CD8-positive, alpha-beta T cell (primary cell): ENCODE measurements at regions of chr18 and their contacts with region 1.

Region 1: DNA sequence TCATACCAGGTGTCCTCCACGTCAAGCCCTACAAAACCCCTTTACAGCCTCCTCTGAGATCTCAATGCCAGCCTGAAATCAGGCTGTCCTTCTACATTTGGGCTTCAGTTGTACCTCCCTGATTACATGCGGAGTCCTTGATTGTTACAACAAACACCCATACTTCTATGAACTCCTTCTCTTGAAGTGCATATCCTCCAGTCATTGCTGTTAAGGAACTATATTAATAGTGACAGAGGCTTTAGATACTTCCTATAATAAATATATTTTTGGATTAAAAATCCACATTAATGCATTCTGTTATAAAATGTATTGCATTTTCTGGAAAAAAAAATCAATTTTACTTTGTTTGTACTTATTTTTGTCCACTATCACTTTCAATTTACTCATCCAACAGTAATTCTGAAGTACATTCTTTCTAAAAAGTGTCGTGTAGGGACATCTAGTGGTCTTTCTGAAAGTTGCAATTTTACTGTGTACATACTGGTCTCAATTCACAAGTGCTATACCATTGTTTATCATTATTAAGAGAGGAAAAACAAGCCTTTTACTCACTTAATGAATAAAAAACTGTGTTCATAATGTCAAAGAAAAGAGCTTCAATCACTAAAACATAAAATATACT is 316.4 kb downstream of the DSEL start:
- DNase-seq: peak in 2 of 9 experiments; percentile 52 to 59
- ATAC-seq: peak; percentile 54
- H3K4me3 ChIP-seq: no peak overlapping the region
- H3K4me3 Mint-ChIP-seq: no peak overlapping the region
- H3K27ac ChIP-seq: no peak overlapping the region
- H3K27ac Mint-ChIP-seq: no peak overlapping the region
- H3K4me1 ChIP-seq: no peaks in the 10 kb centered on the region
- H3K4me1 Mint-ChIP-seq: no peaks in the 10 kb centered on the region
- H3K27me3 ChIP-seq: no peaks in the 10 kb centered on the region
- H3K27me3 Mint-ChIP-seq: peaks cover 18% of the 10 kb centered on the region
- CTCF ChIP-seq: peak; percentile 68

Region 2: DNA sequence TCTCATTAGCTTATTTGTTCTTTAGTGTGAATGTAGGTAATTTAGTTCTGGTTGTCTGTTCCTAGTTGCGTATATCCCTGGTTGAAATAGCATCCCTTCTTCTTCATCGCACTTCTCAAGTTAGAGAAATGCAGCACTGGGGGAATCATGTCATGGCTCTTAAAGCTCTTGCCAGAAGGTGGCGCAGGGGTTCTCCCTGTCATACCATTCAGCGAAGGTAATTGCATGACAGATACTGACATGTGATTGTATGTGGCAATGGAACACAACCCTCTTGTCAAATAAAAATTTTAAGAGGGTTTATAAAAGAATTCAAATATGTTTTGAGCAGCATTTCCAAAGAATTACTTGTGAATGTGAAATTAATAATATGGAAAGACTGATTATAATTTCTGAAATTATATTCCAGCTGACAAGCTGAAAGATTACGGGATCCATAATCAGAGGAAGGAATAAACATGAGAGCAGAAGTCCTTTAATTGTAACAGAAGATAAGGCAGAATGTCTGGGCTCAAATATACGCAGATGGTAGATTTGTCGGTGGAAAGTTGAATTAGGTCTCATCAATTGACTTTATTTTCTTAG is 95.3 kb before region 1 on chr18:
- CTCF ChIA-PET with region 1: interaction called, 3 read pairs
- POLR2A ChIA-PET with region 1: no interaction called
- intact Hi-C with region 1: loop called in 1 of 2 experiments (anchors 2 kb)
- DNase-seq: peak in 6 of 9 experiments; percentile 3 to 50 (median 30)
- ATAC-seq: no peak
- H3K4me3 ChIP-seq: no peak overlapping the region
- H3K4me3 Mint-ChIP-seq: no peak overlapping the region
- H3K27ac ChIP-seq: no peak overlapping the region
- H3K27ac Mint-ChIP-seq: no peak overlapping the region
- H3K4me1 ChIP-seq: no peaks in the 10 kb centered on the region
- H3K4me1 Mint-ChIP-seq: no peaks in the 10 kb centered on the region
- H3K27me3 ChIP-seq: no peaks in the 10 kb centered on the region
- H3K27me3 Mint-ChIP-seq: no peaks in the 10 kb centered on the region
- CTCF ChIP-seq: peak; percentile 22

Region 3: GRCh38 chr18:67243799-67244587 is 43.9 kb after region 1 on chr18:
- CTCF ChIA-PET with region 1: no interaction called
- POLR2A ChIA-PET with region 1: no interaction called
- intact Hi-C with region 1: no loop called
- DNase-seq: peak in 2 of 9 experiments; percentile 10 to 23
- ATAC-seq: peak; percentile 38
- H3K4me3 ChIP-seq: peak overlapping the region; percentile 21 to 33
- H3K4me3 Mint-ChIP-seq: peak overlapping the region; percentile 84
- H3K27ac ChIP-seq: peak overlapping the region; percentile 7 to 58
- H3K27ac Mint-ChIP-seq: peak overlapping the region; percentile 92
- H3K4me1 ChIP-seq: peaks cover 31% of the 10 kb centered on the region
- H3K4me1 Mint-ChIP-seq: peaks cover 38% of the 10 kb centered on the region
- H3K27me3 ChIP-seq: no peaks in the 10 kb centered on the region
- H3K27me3 Mint-ChIP-seq: no peaks in the 10 kb centered on the region
- CTCF ChIP-seq: no peak

Region 4: GRCh38 chr18:67300498-67300897 is 100.4 kb after region 1 on chr18:
- CTCF ChIA-PET with region 1: no interaction called
- POLR2A ChIA-PET with region 1: no interaction called
- intact Hi-C with region 1: no loop called
- DNase-seq: peak in 4 of 9 experiments; percentile 20 to 57 (median 30)
- ATAC-seq: no peak
- H3K4me3 ChIP-seq: no peak overlapping the region
- H3K4me3 Mint-ChIP-seq: no peak overlapping the region
- H3K27ac ChIP-seq: no peak overlapping the region
- H3K27ac Mint-ChIP-seq: no peak overlapping the region
- H3K4me1 ChIP-seq: peaks cover 6% of the 10 kb centered on the region
- H3K4me1 Mint-ChIP-seq: peaks cover 16% of the 10 kb centered on the region
- H3K27me3 ChIP-seq: no peaks in the 10 kb centered on the region
- H3K27me3 Mint-ChIP-seq: no peaks in the 10 kb centered on the region
- CTCF ChIP-seq: no peak